ENCODE measurements at regions of chr19 and their contacts with region 1.

Region 1: DNA sequence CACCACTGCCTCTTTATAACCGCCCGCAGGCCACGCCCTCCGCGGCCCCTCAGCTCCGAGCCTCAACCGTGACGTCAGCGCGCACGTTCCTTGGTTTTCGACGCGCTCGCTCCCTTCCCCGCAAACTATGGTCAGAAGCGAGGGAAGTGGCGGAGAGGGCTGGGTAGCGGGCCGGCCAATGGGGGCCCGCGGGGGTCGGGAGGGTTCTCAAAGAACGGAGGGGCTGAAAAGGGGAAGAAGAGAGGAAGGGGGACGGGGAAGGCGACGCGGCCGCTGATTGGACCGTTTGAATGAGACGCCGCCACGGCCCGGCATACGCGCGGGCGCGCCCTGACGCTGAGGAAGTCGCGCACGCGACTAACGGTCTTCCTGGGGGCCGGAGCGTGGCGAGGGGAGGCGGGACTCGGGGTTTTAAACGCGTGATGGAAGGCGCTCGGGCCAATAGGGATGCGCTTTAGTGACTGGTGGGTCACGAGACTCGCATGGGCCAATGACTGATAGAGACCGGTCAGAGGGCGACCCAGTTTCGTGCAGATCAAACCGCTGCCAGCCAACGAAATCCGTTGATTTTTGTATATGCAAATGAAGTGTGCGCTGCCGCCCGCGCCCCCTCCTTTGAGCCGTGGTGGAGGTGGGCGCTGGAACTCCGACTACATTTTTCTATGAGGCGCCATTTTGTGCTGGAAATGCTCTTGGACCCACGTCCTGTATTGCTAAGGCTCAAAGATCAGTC is 378 bp upstream of the UBE2S start:
- DNase-seq: peak; percentile 95
- H3K4me3 ChIP-seq: peak overlapping the region; percentile 84
- CTCF ChIP-seq: no peak

Region 2: DNA sequence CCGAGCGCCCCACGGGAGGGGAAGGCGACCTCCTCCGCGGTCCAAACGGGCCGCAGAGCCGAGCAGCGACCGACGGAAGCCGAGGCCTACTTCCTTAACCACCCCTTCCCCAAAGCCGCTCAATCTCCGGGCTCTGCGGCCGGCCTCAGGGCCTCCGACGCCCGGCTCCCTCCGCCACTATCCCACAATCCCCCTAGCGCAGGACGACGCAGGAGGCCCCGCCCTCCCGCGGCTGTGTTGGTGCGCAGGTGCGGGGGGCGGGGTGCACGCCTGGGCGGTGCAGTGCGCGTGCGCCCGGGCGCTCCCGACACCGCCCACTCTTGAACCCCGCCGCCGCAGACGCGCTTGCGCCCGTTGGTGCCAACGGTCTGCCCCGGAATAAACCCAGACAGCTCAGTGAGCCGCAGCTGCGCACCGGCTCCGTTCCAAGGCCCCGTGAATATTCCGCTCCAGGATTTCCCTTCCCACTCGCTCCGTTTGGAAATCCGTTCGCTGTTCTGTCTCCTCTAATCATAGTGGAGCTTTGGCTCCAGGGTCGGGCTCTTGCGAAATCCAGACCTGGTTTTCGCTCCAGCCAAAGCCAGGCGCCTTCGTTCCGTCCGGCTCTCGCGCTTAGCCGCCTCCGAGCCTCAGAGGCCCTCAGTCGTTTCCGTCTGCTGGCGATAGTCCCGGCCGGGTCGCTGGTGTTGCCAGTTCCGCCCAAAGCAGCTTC is 149.0 kb before region 1 on chr19 and contains the start of gene PPP6R1:
- CTCF ChIA-PET with region 1: interaction called, 3 read pairs
- POLR2A ChIA-PET with region 1: interaction called, 20 read pairs
- DNase-seq: peak; percentile 97
- H3K4me3 ChIP-seq: peak within 1 kb of the TSS; percentile 92
- CTCF ChIP-seq: no peak

Region 3: DNA sequence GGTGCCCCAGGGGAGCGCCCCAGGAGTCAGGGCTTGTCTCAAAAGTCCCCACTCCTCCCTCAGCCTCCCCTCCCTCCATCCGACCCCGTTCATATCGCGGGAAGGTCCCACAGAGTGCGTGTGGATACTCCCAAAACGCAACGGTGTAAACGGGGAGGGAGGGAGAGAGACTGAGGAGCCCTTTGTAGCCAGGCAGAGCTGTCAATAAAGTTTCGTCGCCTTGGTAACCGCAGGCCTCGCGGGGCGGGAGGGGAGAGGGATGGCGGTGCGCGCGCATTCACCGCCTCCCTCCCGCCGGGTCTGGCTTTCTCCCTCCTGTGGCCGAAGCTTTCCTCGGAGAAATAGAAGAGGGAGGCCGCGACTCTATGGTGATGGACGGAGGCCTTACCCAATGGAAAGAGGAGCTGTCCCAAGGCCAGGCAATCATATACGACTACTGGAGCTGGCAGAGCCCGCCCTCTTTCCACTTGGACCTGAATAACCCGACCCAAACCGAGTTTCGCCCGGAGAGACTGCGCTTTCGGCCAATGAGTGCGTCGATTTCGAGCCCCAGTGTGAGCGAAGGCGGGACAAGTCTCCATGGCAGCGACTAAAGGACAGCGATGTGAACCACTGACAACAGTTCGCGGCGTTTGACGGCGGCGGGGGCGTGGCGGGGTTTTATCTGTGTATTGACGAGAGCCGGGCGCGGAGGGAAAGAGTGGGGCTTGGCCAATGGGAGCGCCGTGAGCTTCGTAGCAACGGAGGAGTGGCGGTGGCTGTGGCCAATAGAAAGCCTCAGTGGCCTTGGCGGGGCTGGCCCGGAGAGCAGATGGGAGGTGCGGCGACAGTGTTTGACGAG is 68.7 kb before region 1 on chr19 and contains the start of gene KMT5C:
- CTCF ChIA-PET with region 1: no interaction called
- POLR2A ChIA-PET with region 1: interaction called, 18 read pairs
- DNase-seq: peak; percentile 100
- H3K4me3 ChIP-seq: peak within 1 kb of the TSS; percentile 74
- CTCF ChIP-seq: peak; percentile 47

Region 4: GRCh38 chr19:55369671-55370304 is 38.2 kb before region 1 on chr19:
- CTCF ChIA-PET with region 1: no interaction called
- POLR2A ChIA-PET with region 1: interaction called, 11 read pairs
- DNase-seq: no peak
- H3K4me3 ChIP-seq: peak overlapping the region; percentile 74
- CTCF ChIP-seq: no peak

Region 5: GRCh38 chr19:55385740-55386529 is 22.0 kb before region 1 on chr19 and contains the start of gene RPL28:
- CTCF ChIA-PET with region 1: interaction called, 4 read pairs
- POLR2A ChIA-PET with region 1: interaction called, 86 read pairs
- DNase-seq: peak; percentile 74
- H3K4me3 ChIP-seq: peak within 1 kb of the TSS; percentile 97
- CTCF ChIP-seq: no peak

Region 6: GRCh38 chr19:55418185-55418584 is 10.2 kb after region 1 on chr19:
- CTCF ChIA-PET with region 1: interaction called, 42 read pairs
- POLR2A ChIA-PET with region 1: interaction called, 15 read pairs
- DNase-seq: peak; percentile 63
- H3K4me3 ChIP-seq: no peak overlapping the region
- CTCF ChIP-seq: peak; percentile 68

Region 7: GRCh38 chr19:55452749-55453346 is 44.9 kb after region 1 on chr19:
- CTCF ChIA-PET with region 1: no interaction called
- POLR2A ChIA-PET with region 1: no interaction called
- DNase-seq: no peak
- H3K4me3 ChIP-seq: no peak overlapping the region
- CTCF ChIP-seq: no peak

Region 8: GRCh38 chr19:55476100-55476775 is 68.3 kb after region 1 on chr19 and contains the start of gene ZNF628:
- CTCF ChIA-PET with region 1: no interaction called
- POLR2A ChIA-PET with region 1: interaction called, 11 read pairs
- DNase-seq: peak; percentile 77
- H3K4me3 ChIP-seq: peak within 1 kb of the TSS; percentile 71
- CTCF ChIP-seq: no peak

Region 9: GRCh38 chr19:55619286-55619685 is 211.3 kb after region 1 on chr19:
- CTCF ChIA-PET with region 1: no interaction called
- POLR2A ChIA-PET with region 1: no interaction called
- DNase-seq: no peak
- H3K4me3 ChIP-seq: no peak overlapping the region
- CTCF ChIP-seq: no peak